ENCODE measurements at regions of chrX and their contacts with region 1.

Region 1: DNA sequence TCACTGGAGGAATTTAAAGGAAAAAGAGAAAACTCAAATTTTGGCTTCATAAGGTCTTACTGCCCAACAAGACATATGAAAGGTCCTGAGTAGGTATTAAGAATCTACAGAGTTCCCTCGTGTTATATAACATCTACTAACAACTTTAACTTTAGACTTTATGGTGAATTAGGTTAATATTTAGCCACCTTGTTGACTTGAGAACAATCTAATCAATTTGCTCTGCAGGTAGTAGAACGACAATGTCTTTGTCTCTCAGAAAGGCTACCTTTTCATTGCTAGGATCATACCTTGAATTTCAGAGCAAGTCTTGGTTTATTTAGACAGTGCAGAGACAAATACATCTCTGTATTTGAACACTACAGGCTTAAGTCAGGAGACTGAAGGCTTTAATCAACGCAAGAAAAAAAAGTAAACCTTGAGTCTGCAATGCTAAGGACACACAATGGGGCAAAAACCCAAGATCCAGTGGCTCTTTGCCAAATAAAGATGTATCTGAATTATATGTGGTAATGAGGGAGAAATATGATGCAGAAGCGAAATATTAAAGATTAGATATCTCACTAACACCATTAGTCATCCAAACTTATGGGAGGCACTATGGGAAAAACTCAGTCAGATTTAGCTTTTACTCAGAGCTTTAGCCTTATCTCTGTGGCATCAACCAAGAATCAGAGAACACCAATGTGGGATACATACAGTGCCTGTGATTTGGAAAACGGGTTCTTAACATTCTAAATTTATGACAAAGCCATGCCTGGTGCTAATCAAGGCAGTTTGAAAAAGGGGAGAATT is 93.6 kb upstream of the FTHL17 start:
- DNase-seq: peak in 1 of 2 experiments; percentile 0
- H3K4me3 ChIP-seq: no peak overlapping the region
- H3K4me3 Mint-ChIP-seq: no peak overlapping the region
- H3K27ac Mint-ChIP-seq: no peak overlapping the region
- H3K4me1 ChIP-seq: peaks cover 12% of the 10 kb centered on the region
- H3K4me1 Mint-ChIP-seq: peaks cover 21% of the 10 kb centered on the region
- H3K27me3 ChIP-seq: no peaks in the 10 kb centered on the region
- H3K27me3 Mint-ChIP-seq: no peaks in the 10 kb centered on the region
- CTCF ChIP-seq: no peak

Region 2: GRCh38 chrX:31012509-31013025 is 152.9 kb before region 1 on chrX:
- CTCF ChIA-PET with region 1: no interaction called
- POLR2A ChIA-PET with region 1: no interaction called
- intact Hi-C with region 1: no loop called
- DNase-seq: no peak
- H3K4me3 ChIP-seq: no peak overlapping the region
- H3K4me3 Mint-ChIP-seq: no peak overlapping the region
- H3K27ac Mint-ChIP-seq: no peak overlapping the region
- H3K4me1 ChIP-seq: no peaks in the 10 kb centered on the region
- H3K4me1 Mint-ChIP-seq: no peaks in the 10 kb centered on the region
- H3K27me3 ChIP-seq: no peaks in the 10 kb centered on the region
- H3K27me3 Mint-ChIP-seq: peaks cover 3% of the 10 kb centered on the region
- CTCF ChIP-seq: no peak

Region 3: GRCh38 chrX:31178064-31178768 is 12.8 kb after region 1 on chrX:
- CTCF ChIA-PET with region 1: no interaction called
- POLR2A ChIA-PET with region 1: no interaction called
- intact Hi-C with region 1: loop called (anchors 1 kb)
- DNase-seq: no peak
- H3K4me3 ChIP-seq: no peak overlapping the region
- H3K4me3 Mint-ChIP-seq: no peak overlapping the region
- H3K27ac Mint-ChIP-seq: peak overlapping the region; percentile 5
- H3K4me1 ChIP-seq: no peaks in the 10 kb centered on the region
- H3K4me1 Mint-ChIP-seq: no peaks in the 10 kb centered on the region
- H3K27me3 ChIP-seq: no peaks in the 10 kb centered on the region
- H3K27me3 Mint-ChIP-seq: no peaks in the 10 kb centered on the region
- CTCF ChIP-seq: no peak

Region 4: DNA sequence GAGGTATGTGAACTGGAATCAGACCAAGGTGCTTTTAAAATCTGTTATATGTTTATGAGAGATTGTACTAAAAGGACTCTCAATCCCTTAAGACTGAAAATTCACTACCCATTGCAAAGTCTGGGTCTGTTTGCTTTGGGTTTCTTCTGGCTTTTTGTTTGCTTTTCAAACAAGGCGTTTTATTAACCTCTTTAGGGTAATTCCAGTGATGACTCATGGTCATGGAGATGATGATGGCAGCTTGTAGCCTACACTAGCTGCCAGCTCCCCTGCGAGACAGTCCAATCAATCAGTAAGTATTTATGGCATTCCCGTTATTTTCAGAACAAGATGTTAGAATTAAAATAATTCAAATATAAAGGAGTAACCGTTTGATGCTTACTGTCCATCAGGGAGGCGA is 550.2 kb after region 1 on chrX:
- CTCF ChIA-PET with region 1: no interaction called
- POLR2A ChIA-PET with region 1: no interaction called
- intact Hi-C with region 1: no loop called
- DNase-seq: no peak
- H3K4me3 ChIP-seq: no peak overlapping the region
- H3K4me3 Mint-ChIP-seq: no peak overlapping the region
- H3K27ac Mint-ChIP-seq: no peak overlapping the region
- H3K4me1 ChIP-seq: no peaks in the 10 kb centered on the region
- H3K4me1 Mint-ChIP-seq: no peaks in the 10 kb centered on the region
- H3K27me3 ChIP-seq: no peaks in the 10 kb centered on the region
- H3K27me3 Mint-ChIP-seq: no peaks in the 10 kb centered on the region
- CTCF ChIP-seq: no peak